MCF 10A (cell line): ENCODE measurements at regions of chr18 and their contacts with region 1.

Region 1: GRCh38 chr18:46173393-46174341 is 69.5 kb downstream of the HAUS1 start:
- DNase-seq: peak; percentile 92
- H3K4me3 Mint-ChIP-seq: peak overlapping the region; percentile 84
- H3K27ac Mint-ChIP-seq: peak overlapping the region; percentile 94
- H3K4me1 Mint-ChIP-seq: peaks cover 6% of the 10 kb centered on the region
- H3K27me3 Mint-ChIP-seq: no peaks in the 10 kb centered on the region
- CTCF ChIP-seq: peak; percentile 89

Region 2: DNA sequence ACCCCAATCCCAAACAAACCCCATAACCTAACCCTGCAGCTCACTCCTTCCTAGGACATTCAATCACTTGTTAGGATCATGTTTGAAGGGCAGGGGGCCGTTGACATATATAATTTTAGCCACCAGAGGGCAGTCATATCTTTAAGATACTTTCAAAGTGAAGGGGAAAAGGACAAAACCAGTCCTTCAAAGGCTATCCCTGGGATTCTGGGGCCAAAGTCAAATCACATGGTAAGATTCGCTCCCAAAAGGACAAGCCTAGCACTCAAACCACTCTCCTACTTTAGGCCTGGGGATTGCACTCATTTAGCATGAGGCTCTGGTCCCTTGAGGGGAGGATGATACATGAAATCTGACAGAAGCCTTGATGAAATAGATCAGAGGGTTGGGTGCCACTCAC is 24.9 kb before region 1 on chr18:
- CTCF ChIA-PET with region 1: interaction called, 94 read pairs
- POLR2A ChIA-PET with region 1: interaction called, 5 read pairs
- intact Hi-C with region 1: loop called (anchors 2 kb)
- DNase-seq: peak; percentile 69
- H3K4me3 Mint-ChIP-seq: no peak overlapping the region
- H3K27ac Mint-ChIP-seq: peak overlapping the region; percentile 3
- H3K4me1 Mint-ChIP-seq: peaks cover 18% of the 10 kb centered on the region
- H3K27me3 Mint-ChIP-seq: no peaks in the 10 kb centered on the region
- CTCF ChIP-seq: peak; percentile 49

Region 3: GRCh38 chr18:46213295-46213694 is 39.6 kb after region 1 on chr18:
- CTCF ChIA-PET with region 1: interaction called, 21 read pairs
- POLR2A ChIA-PET with region 1: interaction called, 4 read pairs
- intact Hi-C with region 1: loop called (anchors 1 kb)
- DNase-seq: peak; percentile 30
- H3K4me3 Mint-ChIP-seq: no peak overlapping the region
- H3K27ac Mint-ChIP-seq: no peak overlapping the region
- H3K4me1 Mint-ChIP-seq: peaks cover 11% of the 10 kb centered on the region
- H3K27me3 Mint-ChIP-seq: no peaks in the 10 kb centered on the region
- CTCF ChIP-seq: peak; percentile 52

Region 4: GRCh38 chr18:46237891-46238290 is 64.2 kb after region 1 on chr18:
- CTCF ChIA-PET with region 1: interaction called, 14 read pairs
- POLR2A ChIA-PET with region 1: interaction called, 4 read pairs
- intact Hi-C with region 1: no loop called
- DNase-seq: no peak
- H3K4me3 Mint-ChIP-seq: no peak overlapping the region
- H3K27ac Mint-ChIP-seq: no peak overlapping the region
- H3K4me1 Mint-ChIP-seq: no peaks in the 10 kb centered on the region
- H3K27me3 Mint-ChIP-seq: no peaks in the 10 kb centered on the region
- CTCF ChIP-seq: no peak

Region 5: DNA sequence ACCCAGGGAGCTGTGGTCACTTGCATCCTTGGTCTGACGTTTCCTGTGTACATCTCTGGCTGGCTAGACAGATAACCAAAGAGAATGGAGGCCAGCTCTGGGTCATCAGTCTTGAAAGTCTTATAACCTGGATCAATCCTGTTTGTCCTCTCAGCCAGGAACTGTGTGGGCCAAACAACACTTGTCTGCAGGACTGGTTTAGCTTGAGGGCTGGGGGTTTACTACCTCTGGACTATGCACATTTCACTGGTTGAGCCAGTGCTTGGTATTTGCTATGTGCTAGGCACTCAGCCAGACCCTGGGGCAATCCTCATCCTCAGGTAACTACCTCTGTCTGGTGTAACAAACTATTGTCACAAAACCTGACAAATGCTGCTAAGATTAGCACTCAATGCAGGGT is 100.2 kb after region 1 on chr18:
- CTCF ChIA-PET with region 1: interaction called, 25 read pairs
- POLR2A ChIA-PET with region 1: interaction called, 4 read pairs
- intact Hi-C with region 1: no loop called
- DNase-seq: no peak
- H3K4me3 Mint-ChIP-seq: no peak overlapping the region
- H3K27ac Mint-ChIP-seq: no peak overlapping the region
- H3K4me1 Mint-ChIP-seq: peaks cover 8% of the 10 kb centered on the region
- H3K27me3 Mint-ChIP-seq: no peaks in the 10 kb centered on the region
- CTCF ChIP-seq: no peak